Left cardiac atrium (tissue), 4 donors: ENCODE measurements at regions of chr4 and their contacts with region 1.

Region 1: GRCh38 chr4:128454281-128455075 is 166.9 kb upstream of the PGRMC2 start:
- DNase-seq: peak; percentile 84
- ATAC-seq: peak; percentile 94 to 96

Region 2: DNA sequence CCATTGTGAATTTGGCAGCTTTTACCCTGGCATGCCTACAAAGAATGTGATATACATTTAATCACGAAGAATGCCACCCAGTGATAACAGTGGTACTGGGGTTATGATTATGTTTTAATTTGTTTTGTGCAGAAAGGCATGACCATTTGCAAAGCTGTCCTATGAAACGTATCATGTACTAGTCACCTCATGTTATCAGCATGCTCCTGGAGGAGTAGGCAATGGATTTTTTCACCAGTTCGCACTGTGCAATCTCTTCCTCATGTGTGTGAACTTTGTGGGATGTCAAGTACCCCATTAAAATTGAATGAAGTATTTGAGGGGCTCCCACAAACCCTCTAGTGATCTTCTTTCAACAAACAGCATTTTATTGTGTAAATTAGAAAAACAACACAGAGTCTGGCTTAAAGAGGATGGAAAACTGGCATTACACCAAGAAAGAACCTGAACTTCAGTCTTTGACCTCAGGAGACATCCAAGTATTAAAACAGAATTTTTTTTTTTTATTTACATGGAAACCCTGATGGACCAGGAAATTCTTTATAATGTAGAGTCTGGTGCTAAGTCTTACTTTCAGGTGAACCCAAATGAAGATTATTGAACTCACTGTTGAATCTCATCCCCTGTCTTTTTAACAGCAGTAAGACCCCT is 33.7 kb after region 1 on chr4:
- intact Hi-C with region 1: no loop called
- DNase-seq: no peak
- ATAC-seq: no peak

Region 3: DNA sequence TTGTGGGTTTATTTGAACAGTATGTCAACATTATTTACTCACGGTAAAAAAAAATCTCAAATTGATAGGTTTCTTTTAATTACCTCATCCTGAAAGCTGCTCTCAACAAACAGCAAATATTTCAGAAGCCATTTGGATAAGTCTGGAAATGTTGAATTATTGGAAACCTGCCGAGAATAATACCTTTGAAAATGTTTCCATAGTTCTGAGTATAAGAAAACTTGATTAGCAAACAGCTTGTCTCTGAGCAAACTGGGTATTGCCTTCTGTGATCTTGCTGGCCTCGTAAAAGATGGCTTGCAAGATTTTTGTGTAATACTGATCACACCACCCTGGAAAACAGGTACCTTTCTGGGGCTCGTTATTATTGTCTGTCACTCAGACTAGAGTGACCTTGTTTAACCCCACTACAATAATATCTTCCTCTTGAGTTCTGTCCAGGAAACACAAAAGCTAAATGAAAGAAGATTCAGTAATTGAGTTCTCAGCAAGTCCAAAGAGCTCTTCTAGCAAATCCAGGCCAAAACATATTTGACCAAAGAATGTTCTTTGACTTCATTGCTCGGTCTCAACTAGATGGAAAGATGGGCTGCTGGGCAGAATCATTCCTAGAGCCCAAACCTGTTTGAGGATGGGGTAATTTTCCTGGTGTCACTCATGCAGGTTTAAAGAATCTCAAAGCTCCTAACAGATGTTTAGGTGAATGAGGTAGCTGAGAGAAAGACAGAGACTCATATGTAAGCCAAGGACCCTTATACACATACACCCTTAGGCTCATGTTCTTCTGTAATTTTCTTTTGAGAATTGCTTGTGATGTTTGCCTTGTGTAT is 99.4 kb after region 1 on chr4:
- intact Hi-C with region 1: loop called (anchors 5 to 10 kb)
- DNase-seq: no peak
- ATAC-seq: peak; percentile 17 to 30

Region 4: DNA sequence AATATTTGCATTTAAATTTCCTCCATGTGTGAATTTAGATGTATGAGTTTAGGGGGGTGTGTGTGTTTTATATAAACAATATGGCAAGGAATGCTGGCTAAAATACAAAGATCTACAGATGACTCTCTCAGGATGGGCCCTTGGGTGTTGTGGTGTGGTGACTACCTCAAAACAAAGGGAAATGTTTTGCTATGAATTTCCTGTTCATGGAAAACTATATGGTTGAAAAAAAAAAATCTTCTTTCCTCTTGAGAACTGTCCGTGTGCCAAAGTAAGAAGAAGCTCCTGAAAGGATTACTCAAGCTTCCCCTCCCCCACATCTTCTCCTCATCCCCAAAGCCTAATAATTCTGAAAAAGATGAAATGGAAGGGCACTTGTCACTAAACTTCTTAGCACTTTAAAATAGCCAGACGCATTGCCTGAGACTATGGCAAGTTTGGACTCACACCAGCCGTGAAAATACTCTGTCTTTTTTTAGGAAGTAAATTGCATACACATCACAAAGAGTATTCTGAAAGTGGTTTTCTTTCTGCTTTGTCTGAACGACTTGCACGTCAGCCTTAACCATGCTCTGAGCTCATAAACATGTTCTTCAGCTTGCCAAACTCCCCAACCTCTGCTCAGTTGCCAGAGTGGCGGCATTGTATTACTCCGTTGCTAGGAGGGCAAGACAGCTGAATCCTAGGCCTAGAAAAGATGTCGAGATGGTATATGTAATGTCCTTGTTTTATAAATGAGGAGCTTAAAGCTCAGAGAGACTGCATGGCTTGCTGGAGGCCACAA is 104.6 kb after region 1 on chr4:
- intact Hi-C with region 1: loop called (anchors 5 to 10 kb)
- DNase-seq: no peak
- ATAC-seq: peak; percentile 58 to 62

Region 5: DNA sequence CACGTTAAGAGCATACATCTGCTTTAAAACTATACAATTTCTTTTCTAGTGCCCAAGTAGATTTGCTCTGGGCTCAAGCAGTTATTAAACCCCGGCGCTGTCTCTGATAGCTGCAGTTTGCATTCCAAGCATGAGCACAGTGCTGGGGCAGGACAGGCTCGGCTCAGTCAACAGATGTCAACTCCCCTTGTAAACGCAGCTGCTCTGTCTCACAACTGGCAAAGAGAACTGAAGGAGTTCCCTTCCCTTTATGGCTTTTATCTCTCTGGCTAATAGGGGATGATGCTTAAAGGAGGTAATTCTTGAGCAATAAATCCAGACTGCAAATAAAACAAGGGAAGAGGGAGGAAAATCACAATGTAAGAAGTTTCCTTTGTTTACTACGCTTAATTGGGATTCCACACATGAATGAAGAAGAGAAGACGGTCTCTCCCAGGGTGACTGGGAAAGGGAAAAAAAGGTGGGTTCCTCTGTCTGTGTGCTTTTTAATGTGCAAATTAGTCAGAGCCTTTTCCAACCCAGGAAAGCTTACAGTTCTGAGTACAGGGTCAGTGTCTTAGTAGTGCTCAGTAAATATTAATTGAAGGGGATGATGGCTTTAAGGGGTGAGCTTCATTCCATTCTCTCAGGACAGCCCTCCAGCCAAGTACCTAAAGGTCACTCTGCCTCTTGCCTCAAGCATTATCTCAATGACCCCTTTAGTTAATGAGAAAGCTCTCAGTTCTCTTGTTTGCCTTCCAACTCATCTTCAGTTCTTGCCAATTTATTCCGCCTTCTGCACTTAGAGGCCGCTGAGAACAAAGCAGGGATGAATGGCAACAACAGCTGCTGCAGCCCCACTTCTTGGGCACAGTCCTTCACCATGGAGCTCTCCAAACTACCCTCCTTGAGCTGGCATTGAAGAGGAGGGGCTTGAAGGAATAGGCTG is 199.3 kb after region 1 on chr4:
- intact Hi-C with region 1: loop called in 1 of 2 experiments (anchors 10 kb)
- DNase-seq: peak; percentile 49
- ATAC-seq: peak; percentile 85 to 94

Region 6: GRCh38 chr4:128757712-128758111 is 303.2 kb after region 1 on chr4:
- intact Hi-C with region 1: no loop called
- DNase-seq: peak; percentile 32
- ATAC-seq: peak; percentile 82 to 97

Region 7: DNA sequence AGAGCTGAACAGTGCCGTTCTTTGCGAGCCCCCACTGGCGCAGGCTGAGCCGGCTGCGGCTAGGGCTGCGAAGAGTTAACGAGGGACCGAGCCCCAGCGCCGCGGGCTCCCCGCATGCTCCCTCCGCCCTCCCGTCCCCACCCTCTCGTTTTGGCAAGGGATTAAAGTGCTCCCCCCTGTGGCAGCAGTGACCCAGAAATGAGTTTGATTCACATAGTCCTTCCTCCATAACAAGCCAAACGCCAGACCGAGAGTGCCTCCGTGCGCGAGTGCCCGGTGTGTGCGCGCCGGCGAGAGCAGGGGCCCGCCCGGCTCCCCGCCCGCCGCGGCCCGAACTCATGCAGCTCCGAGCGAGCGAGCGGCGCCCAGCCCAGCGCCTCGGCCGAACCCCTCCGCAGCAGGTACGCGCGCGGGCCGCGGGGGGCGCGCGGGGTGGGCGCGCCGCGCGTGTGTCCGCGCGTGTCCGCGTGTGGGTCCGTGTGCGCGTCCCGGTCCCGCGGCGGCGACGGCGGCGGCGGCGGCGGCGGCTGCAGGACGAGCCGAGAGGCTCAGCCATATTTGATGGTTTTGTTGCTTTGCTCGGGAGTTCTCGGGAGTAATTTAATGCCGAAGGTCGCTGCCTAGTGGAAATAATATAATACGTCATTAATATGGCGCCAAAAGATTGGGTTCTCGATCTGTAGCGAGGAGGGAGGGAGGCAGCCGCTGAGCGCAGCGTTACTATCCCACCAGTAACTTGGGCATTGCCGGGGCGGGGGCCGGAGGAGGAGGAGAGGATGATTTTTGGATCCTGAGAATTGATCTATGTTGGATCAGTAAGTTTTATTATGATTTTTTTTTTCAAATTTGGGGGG is 355.2 kb after region 1 on chr4 and contains the start of gene JADE1:
- intact Hi-C with region 1: loop called in 1 of 2 experiments (anchors 10 kb)
- DNase-seq: peak; percentile 92
- ATAC-seq: peak; percentile 72 to 76
- total RNA-seq, gene JADE1: 22.7 to 32.3 TPM

Region 8: GRCh38 chr4:128863312-128864075 is 409.0 kb after region 1 on chr4:
- intact Hi-C with region 1: loop called in 1 of 2 experiments (anchors 5 kb)
- DNase-seq: peak; percentile 78
- ATAC-seq: peak; percentile 63 to 65

Region 9: DNA sequence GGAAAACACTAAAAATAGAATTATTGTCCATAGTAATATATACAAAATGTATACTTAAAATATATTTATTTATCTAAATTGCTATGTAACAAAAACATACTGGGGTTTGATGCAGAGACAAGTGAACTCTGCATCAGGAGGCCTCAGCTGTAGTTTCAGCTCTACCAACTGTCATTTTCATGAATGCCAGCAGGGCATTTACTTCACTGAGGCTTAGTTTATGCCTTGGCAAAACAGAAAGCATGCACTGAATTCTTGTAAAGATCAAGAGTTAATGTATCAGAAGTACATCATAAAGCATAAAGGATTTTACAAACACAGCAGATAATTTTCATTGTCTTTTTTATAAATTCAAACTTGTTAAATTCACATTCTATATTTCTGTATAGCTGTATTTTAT is 1218.5 kb after region 1 on chr4:
- intact Hi-C with region 1: no loop called
- DNase-seq: no peak
- ATAC-seq: no peak